ENCODE measurements at regions of chr5 and their contacts with region 1.

Region 1: GRCh38 chr5:81288021-81288433 is 13.4 kb upstream of the ZCCHC9 start:
- DNase-seq: no peak
- ATAC-seq: no peak
- H3K4me3 ChIP-seq: no peak overlapping the region
- H3K4me3 Mint-ChIP-seq: no peak overlapping the region
- H3K27ac ChIP-seq: no peak overlapping the region
- H3K27ac Mint-ChIP-seq: no peak overlapping the region
- H3K4me1 ChIP-seq: peaks cover 0 to 12% of the 10 kb centered on the region in 2 experiments
- H3K4me1 Mint-ChIP-seq: peaks cover 53 to 60% (median 56%) of the 10 kb centered on the region in 3 donors
- H3K27me3 ChIP-seq: no peaks in the 10 kb centered on the region
- H3K27me3 Mint-ChIP-seq: no peaks in the 10 kb centered on the region

Region 2: GRCh38 chr5:81301271-81302015 is 13.4 kb after region 1 on chr5 and contains the start of gene ZCCHC9:
- CTCF ChIA-PET with region 1: interaction called, 7 to 14 read pairs
- POLR2A ChIA-PET with region 1: no interaction called
- DNase-seq: peak; percentile 74 to 96 (median 92)
- ATAC-seq: peak; percentile 94 to 96 (median 95)
- H3K4me3 ChIP-seq: peak within 1 kb of the TSS; percentile 74 to 99
- H3K4me3 Mint-ChIP-seq: peak within 1 kb of the TSS; percentile 88 to 92 (median 91)
- H3K27ac ChIP-seq: peak within 1 kb of the TSS; percentile 81
- H3K27ac Mint-ChIP-seq: peak within 1 kb of the TSS; percentile 90 to 92
- H3K4me1 ChIP-seq: peaks cover 16 to 26% of the 10 kb centered on the region in 2 experiments
- H3K4me1 Mint-ChIP-seq: peaks cover 51 to 61% (median 57%) of the 10 kb centered on the region in 3 donors
- H3K27me3 ChIP-seq: no peaks in the 10 kb centered on the region
- H3K27me3 Mint-ChIP-seq: no peaks in the 10 kb centered on the region
- total RNA-seq, gene ZCCHC9: 15.9 to 25.7 (median 22.3) TPM